Caco-2 (cell line): ENCODE measurements at regions of chr9 and their contacts with region 1.

Region 1: GRCh38 chr9:32526041-32526706 is at the start of gene RIGI:
- DNase-seq: peak; percentile 83 to 91
- H3K4me3 ChIP-seq: peak within 1 kb of the TSS; percentile 52
- H3K4me3 Mint-ChIP-seq: peak within 1 kb of the TSS; percentile 73
- H3K27ac Mint-ChIP-seq: peak within 1 kb of the TSS; percentile 59
- H3K4me1 ChIP-seq: peaks cover 19% of the 10 kb centered on the region
- H3K4me1 Mint-ChIP-seq: peaks cover 28% of the 10 kb centered on the region
- H3K27me3 ChIP-seq: no peaks in the 10 kb centered on the region
- H3K27me3 Mint-ChIP-seq: no peaks in the 10 kb centered on the region
- CTCF ChIP-seq: peak; percentile 54 to 58
- total RNA-seq, gene RIGI: 7.9 and 8.0 TPM in 2 replicates

Region 2: DNA sequence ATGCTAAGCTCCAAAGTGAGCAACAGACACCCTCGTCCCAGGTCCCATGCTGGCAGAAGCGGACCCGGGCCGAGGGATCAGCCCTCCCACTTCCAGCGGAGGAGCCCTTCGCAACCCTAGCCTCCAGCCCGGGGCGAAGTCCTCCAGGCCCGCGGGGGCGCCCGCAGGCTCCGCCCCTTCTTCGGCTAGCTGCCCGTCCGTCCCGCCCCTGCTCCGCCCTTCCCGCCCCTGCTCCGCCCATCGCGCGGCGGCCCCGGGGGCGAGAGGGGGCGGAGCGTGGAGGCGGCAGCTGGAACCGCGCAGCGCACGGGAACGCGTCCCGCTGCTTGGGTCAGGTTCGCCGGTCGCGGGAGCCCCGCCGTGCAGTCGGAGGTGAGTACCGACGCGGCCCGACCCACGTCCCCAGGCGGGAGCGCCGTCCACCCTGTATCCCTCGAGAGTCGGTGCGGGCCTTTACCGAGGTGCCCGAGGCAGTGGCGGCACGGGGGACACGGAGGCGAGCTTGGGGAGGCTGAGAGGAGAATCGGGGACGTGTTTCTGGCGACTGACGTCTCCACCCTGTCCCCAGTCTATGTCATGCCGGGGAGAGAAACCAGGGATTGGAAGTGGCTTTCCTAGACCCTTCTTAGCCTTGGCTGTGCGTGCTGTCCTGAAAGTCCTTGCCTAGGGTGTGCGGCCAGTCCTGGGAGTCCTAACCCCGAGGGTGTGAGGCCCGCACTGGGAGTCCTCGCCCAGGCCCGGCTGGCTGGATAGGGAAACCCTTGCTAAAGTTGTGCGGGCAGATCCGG is 141.6 kb before region 1 on chr9 and contains the start of gene ACO1:
- CTCF ChIA-PET with region 1: interaction called, 115 read pairs
- POLR2A ChIA-PET with region 1: interaction called, 9 read pairs
- intact Hi-C with region 1: loop called (anchors 1 kb)
- DNase-seq: peak; percentile 92 to 96
- H3K4me3 ChIP-seq: peak within 1 kb of the TSS; percentile 76
- H3K4me3 Mint-ChIP-seq: peak within 1 kb of the TSS; percentile 83
- H3K27ac Mint-ChIP-seq: peak within 1 kb of the TSS; percentile 51
- H3K4me1 ChIP-seq: 0 out of 2 replicates have a peak, but pooled peaks cover 4% of the 10 kb centered on the region
- H3K4me1 Mint-ChIP-seq: peaks cover 13% of the 10 kb centered on the region
- H3K27me3 ChIP-seq: no peaks in the 10 kb centered on the region
- H3K27me3 Mint-ChIP-seq: peaks cover 8% of the 10 kb centered on the region
- CTCF ChIP-seq: no peak
- total RNA-seq, gene ACO1: 51.1 and 54.7 TPM in 2 replicates

Region 3: GRCh38 chr9:32456564-32456963 is 69.6 kb before region 1 on chr9:
- CTCF ChIA-PET with region 1: interaction called, 10 read pairs
- POLR2A ChIA-PET with region 1: interaction called, 6 read pairs
- intact Hi-C with region 1: loop called (anchors 2 kb)
- DNase-seq: peak in 1 of 2 experiments; percentile 41
- H3K4me3 ChIP-seq: no peak overlapping the region
- H3K4me3 Mint-ChIP-seq: peak overlapping the region; percentile 54
- H3K27ac Mint-ChIP-seq: peak overlapping the region; percentile 82
- H3K4me1 ChIP-seq: peaks cover 26% of the 10 kb centered on the region
- H3K4me1 Mint-ChIP-seq: peaks cover 20% of the 10 kb centered on the region
- H3K27me3 ChIP-seq: no peaks in the 10 kb centered on the region
- H3K27me3 Mint-ChIP-seq: no peaks in the 10 kb centered on the region
- CTCF ChIP-seq: no peak

Region 4: DNA sequence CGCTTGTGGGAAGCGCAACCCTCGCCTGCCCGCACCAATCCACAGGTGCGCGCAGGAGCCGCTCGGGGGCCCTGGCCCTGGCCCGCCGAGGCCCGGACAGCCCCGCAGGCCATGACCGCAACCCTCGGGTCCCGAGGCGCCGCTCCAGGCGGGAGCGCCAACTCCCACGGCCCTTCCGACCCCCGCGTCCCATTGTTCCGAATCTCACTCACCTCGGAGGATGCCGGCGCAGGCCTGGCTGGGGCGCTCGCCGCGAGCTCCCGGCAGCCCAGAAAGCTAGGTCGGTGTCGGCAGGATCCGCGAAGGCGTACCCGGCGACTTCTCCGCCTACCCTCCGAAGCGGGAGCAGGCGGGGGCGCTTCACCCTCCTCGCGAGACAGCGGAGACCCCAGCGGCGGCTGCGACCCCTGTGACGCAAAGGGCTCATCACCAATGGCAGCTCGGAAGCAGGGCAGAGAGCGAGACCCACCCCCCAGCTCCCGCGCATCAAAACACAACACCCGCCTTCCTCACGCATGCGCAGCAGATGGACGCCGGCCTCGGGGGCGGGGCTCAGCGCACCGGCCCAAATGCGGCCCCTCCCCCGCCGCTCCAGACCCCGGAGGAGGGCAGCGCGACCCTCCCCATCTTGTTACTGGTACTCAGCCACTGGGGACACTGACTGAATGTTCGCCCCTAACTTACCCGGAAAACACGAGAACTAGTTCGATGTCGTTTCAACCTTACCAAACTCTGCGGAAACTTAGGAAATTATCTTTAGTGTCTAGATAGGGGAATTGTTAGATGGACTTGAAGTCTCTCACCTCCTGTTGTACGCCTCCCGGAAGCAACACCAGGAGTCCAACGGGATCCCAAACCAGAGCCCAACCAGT is 24.6 kb after region 1 on chr9:
- CTCF ChIA-PET with region 1: interaction called, 18 read pairs
- POLR2A ChIA-PET with region 1: interaction called, 3 read pairs
- intact Hi-C with region 1: loop called (anchors 1 kb)
- DNase-seq: peak; percentile 96 to 97
- H3K4me3 ChIP-seq: peak overlapping the region; percentile 87
- H3K4me3 Mint-ChIP-seq: peak overlapping the region; percentile 93
- H3K27ac Mint-ChIP-seq: peak overlapping the region; percentile 96
- H3K4me1 ChIP-seq: no peaks in the 10 kb centered on the region
- H3K4me1 Mint-ChIP-seq: peaks cover 7% of the 10 kb centered on the region
- H3K27me3 ChIP-seq: no peaks in the 10 kb centered on the region
- H3K27me3 Mint-ChIP-seq: no peaks in the 10 kb centered on the region
- CTCF ChIP-seq: no peak

Region 5: GRCh38 chr9:32579706-32580331 is 53.6 kb after region 1 on chr9:
- CTCF ChIA-PET with region 1: interaction called, 10 read pairs
- POLR2A ChIA-PET with region 1: no interaction called
- intact Hi-C with region 1: no loop called
- DNase-seq: peak; percentile 59 to 71
- H3K4me3 ChIP-seq: no peak overlapping the region
- H3K4me3 Mint-ChIP-seq: no peak overlapping the region
- H3K27ac Mint-ChIP-seq: no peak overlapping the region
- H3K4me1 ChIP-seq: peaks cover 15% of the 10 kb centered on the region
- H3K4me1 Mint-ChIP-seq: peaks cover 14% of the 10 kb centered on the region
- H3K27me3 ChIP-seq: no peaks in the 10 kb centered on the region
- H3K27me3 Mint-ChIP-seq: peaks cover 5% of the 10 kb centered on the region
- CTCF ChIP-seq: peak; percentile 90 to 92